HEK293 (cell line): ENCODE measurements at regions of chr15 and their contacts with region 1.

Region 1: DNA sequence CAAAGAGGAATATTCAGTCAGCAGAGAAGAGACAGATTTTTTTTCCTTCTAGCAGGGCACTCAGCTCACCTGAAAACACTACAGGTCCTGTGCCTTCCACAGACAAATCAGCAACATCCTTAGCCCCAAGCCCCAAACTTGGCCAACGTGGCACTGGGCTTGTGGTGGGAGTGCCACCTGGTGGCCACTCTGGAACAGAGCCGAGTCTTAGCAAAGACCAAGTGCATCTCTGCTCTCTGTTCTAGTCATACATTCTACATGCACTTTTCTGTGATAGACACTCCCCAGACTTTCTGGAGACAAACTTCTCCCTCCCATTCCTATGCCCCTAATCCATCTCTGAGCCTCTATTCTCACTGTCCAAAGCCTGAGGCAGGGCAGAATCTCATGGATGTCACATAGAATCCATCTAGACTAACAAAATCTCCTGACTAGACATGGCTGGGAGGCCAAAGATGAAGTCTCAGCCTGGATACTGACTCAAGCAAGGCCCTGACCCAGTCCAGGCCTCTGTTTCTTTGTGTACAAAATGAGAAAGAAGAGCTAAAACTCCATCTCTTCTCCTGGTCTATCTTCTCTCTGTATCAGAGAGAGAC is 5.1 kb upstream of the SEMA7A start:
- H3K4me3 ChIP-seq: no peak overlapping the region
- H3K27ac ChIP-seq: no peak overlapping the region
- H3K4me1 ChIP-seq: peaks cover 4% of the 10 kb centered on the region
- CTCF ChIP-seq: peak; percentile 93

Region 2: DNA sequence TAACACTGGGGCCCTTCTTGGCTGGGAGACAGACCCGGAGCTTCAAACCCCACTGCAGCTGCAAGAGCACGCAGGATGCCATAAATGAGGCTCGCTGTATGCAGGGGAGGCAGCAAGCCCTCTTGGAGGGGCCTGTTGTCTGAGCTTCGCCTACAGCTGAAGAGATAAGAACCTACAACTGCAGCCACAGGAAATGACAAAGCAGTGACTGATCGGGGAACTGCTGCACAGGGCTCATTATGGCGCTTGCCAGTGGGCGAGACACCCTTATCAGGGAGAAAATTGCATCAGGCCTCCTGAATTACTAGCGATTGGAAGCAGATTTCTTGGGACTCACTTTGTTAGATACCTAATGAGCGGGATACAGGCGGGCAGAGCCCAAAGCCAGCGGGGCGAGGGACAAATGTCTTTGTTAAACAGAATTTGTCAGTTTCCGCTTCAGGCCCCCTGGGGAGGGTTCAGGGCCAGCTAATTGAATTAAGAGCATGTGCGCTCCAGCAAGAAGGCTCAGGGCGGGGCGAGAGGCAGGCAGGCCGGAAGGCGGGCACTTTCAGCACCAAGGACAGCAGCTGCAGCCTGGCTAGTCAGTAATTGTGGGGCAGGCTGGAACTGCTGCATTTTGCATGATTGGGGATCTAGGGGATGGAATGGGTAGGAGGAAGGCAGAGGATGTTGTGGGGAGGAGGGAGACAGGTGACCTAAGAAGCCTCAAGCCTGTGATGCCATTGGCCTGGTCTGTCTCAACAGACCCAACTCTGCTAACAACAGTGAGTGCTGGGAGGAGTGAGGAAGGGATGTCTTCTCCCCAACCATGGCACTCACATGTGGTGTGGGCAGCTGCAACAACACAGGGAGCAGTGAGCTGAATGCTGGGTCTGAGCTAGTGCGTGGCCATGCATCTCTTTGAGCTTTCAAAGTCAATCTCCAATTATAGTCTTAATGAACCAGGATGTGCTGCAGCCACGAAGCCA is 147.4 kb before region 1 on chr15:
- CTCF ChIA-PET with region 1: no interaction called
- POLR2A ChIA-PET with region 1: no interaction called
- H3K4me3 ChIP-seq: no peak overlapping the region
- H3K27ac ChIP-seq: no peak overlapping the region
- H3K4me1 ChIP-seq: no peaks in the 10 kb centered on the region
- CTCF ChIP-seq: no peak

Region 3: GRCh38 chr15:74302821-74303359 is 135.9 kb before region 1 on chr15:
- CTCF ChIA-PET with region 1: no interaction called
- POLR2A ChIA-PET with region 1: no interaction called
- H3K4me3 ChIP-seq: no peak overlapping the region
- H3K27ac ChIP-seq: no peak overlapping the region
- H3K4me1 ChIP-seq: no peaks in the 10 kb centered on the region; the same call in 1 of the 2 replicates
- CTCF ChIP-seq: peak; percentile 87

Region 4: DNA sequence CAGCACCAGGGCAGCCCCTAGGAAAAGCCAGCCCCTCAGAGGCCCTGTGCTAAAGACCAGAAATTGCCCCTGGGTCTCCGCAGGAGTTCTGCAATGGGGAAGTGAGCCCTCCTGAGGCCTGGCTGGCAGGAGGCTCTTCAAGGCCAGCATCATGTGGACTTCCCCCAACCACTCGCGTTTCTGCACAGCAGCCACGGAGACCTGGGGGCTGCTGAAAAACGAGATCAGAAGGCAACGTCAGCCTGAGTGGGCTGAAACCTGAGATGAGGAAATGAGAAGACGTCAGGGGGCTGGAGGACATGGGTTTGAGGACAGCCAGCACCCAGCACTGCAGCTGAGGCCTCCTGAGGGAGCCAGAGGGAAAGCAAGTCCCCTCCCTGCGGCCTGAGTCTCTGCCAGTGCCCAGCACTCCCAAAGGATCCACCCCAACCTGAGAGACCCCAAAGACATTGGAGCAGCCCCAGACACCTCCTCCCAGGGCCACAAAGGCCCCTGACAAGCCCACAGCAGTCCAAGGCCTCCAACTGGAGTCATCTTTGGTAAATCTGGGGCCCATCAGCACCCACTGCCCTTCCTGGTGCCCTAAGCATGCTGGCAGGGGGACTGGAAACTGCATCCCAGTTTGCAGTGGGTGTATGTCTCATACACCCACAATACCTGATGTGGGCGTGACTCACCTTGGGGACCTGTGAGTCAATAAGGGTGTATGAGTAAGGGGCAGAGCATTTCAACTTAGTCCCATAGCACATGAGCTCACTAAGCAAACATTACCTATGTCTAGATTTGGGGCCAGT is 42.2 kb before region 1 on chr15:
- CTCF ChIA-PET with region 1: interaction called, 14 read pairs
- POLR2A ChIA-PET with region 1: no interaction called
- H3K4me3 ChIP-seq: no peak overlapping the region
- H3K27ac ChIP-seq: no peak overlapping the region
- H3K4me1 ChIP-seq: no peaks in the 10 kb centered on the region
- CTCF ChIP-seq: no peak

Region 5: GRCh38 chr15:74451861-74452710 is 13.3 kb after region 1 on chr15:
- CTCF ChIA-PET with region 1: interaction called, 41 read pairs
- POLR2A ChIA-PET with region 1: interaction called, 3 read pairs
- H3K4me3 ChIP-seq: no peak overlapping the region
- H3K27ac ChIP-seq: no peak overlapping the region
- H3K4me1 ChIP-seq: no peaks in the 10 kb centered on the region
- CTCF ChIP-seq: no peak

Region 6: DNA sequence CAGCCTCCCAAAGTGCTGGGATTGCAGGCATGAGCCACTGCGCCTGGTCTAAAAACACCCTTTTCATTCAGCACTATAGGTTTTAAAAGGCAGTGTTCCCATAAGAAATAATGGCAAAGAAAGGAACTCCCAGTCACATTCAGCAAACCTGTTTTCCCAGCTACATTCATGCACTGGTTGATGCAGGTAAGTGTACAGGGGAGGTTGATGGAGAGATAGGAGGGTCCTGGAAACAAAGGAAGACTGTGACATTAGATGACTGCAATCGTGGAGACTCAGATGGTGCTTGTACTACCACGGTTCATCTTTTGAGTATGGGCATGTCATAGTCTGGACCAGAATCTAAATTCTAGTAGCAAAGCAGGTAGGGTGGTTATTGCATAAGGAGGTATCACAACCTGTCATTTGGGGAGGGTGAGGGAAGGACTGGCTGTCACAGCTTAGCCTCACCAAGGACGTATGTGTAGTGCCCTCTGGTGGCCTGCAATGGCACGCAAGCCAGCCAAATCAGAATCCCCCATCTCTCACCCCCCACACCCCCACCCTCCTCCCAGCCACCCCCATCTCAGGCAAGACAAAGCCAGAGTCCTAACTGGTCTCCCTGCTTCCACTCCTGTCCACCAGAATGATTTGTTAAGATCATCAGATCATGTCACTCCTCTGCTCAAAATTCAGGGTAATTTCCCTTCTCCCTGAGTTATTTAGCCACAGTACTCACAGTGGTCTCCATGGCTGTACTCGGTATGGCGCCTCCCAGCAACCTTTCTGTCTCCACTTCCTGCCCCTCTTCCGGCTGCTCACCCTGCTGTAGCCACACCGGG is 50.9 kb after region 1 on chr15:
- CTCF ChIA-PET with region 1: interaction called, 10 read pairs
- POLR2A ChIA-PET with region 1: no interaction called
- H3K4me3 ChIP-seq: no peak overlapping the region
- H3K27ac ChIP-seq: no peak overlapping the region; the same call in 1 of the 2 replicates
- H3K4me1 ChIP-seq: peaks cover 3% of the 10 kb centered on the region; the same call in 1 of the 2 replicates
- CTCF ChIP-seq: peak; percentile 70

Region 7: DNA sequence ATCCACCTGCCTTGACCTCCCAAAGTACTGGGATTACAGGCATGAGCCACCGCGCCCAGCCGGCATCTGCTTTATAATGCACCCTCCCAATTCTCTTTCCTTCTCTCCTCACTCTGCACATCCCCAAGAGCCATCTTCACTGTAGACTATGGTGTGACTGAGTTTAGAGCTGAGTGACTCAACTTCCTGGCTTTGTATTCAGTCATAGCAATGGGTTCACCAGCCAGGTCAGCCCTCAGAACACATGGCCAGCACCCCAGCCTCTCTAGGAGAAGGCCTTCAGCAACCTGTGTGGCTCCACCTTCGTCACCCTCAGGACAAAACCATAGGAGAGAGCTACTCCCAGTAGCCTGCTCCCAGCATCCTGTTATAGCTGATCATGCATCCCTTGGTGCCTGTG is 135.2 kb after region 1 on chr15:
- CTCF ChIA-PET with region 1: no interaction called
- POLR2A ChIA-PET with region 1: no interaction called
- H3K4me3 ChIP-seq: no peak overlapping the region
- H3K27ac ChIP-seq: no peak overlapping the region
- H3K4me1 ChIP-seq: peaks cover 3% of the 10 kb centered on the region; the same call in 1 of the 2 replicates
- CTCF ChIP-seq: no peak